HCT116 (cell line): ENCODE measurements at regions of chr10 and their contacts with region 1.

Region 1: DNA sequence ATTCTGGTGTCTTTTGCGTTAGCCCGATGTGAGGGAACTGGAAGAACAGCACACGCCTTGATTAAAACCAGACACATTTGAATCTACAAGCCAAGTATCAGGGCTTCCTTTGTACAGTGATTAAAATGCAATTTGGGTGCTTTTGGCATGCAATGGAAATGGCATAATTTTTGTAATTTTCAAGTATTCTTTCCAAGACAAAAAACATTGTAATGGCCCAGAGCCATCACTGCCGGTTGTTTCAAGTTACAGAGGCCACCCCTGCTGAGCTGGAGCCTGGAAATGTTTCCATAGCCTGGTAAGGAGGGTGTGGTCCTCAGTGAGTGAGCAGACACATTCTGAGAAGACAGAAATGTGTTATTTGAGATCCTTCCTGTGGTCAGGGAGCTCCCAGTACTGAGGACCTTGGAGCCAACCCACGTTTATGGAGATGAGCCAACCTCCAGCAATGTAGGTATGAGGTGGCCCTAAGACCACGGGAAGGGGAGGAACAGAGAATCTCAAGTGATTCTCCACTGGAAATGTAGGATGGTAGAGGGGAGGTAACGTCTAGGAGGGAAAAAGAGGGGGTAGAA is 20.9 kb downstream of the TEX36 start:
- DNase-seq: peak; percentile 97
- ATAC-seq: peak; percentile 92
- H3K4me3 ChIP-seq: peak overlapping the region; percentile 12 to 45
- H3K27ac ChIP-seq: peak overlapping the region; percentile 83
- H3K4me1 ChIP-seq: peaks cover 29 to 38% of the 10 kb centered on the region in 2 experiments
- H3K27me3 ChIP-seq: no peaks in the 10 kb centered on the region
- CTCF ChIP-seq: no peak
- POLR2A ChIP-seq: no peak
- RAD21 ChIP-seq: peak; percentile 16; the same call in 1 of the 2 replicates

Region 2: GRCh38 chr10:125296603-125297002 is 365.4 kb before region 1 on chr10:
- CTCF ChIA-PET with region 1: no interaction called
- POLR2A ChIA-PET with region 1: no interaction called
- RAD21 ChIA-PET with region 1: no interaction called
- intact Hi-C with region 1: no loop called
- DNase-seq: no peak
- ATAC-seq: peak; percentile 52; the same call in 1 of the 2 replicates
- H3K4me3 ChIP-seq: no peak overlapping the region
- H3K27ac ChIP-seq: no peak overlapping the region
- H3K4me1 ChIP-seq: peaks cover 0 to 5% of the 10 kb centered on the region in 2 experiments; a peak in 1 of 4 replicates
- H3K27me3 ChIP-seq: no peaks in the 10 kb centered on the region
- CTCF ChIP-seq: no peak
- POLR2A ChIP-seq: no peak
- RAD21 ChIP-seq: no peak

Region 3: GRCh38 chr10:125700355-125700911 is 38.4 kb after region 1 on chr10:
- CTCF ChIA-PET with region 1: no interaction called
- POLR2A ChIA-PET with region 1: no interaction called
- RAD21 ChIA-PET with region 1: no interaction called
- intact Hi-C with region 1: no loop called
- DNase-seq: no peak
- ATAC-seq: no peak
- H3K4me3 ChIP-seq: no peak overlapping the region
- H3K27ac ChIP-seq: no peak overlapping the region
- H3K4me1 ChIP-seq: no peaks in the 10 kb centered on the region
- H3K27me3 ChIP-seq: 0 out of 2 replicates have a peak, but pooled peaks cover 1% of the 10 kb centered on the region
- CTCF ChIP-seq: peak; percentile 10 to 65 (median 49); a peak in 3 of 6 replicates
- POLR2A ChIP-seq: no peak
- RAD21 ChIP-seq: peak; percentile 77

Region 4: GRCh38 chr10:125719146-125720001 is 57.3 kb after region 1 on chr10 and contains the start of gene EDRF1:
- CTCF ChIA-PET with region 1: no interaction called
- POLR2A ChIA-PET with region 1: interaction called, 7 read pairs
- RAD21 ChIA-PET with region 1: no interaction called
- intact Hi-C with region 1: loop called (anchors 2 kb)
- DNase-seq: peak; percentile 99
- ATAC-seq: peak; percentile 97
- H3K4me3 ChIP-seq: peak within 1 kb of the TSS; percentile 87 to 99
- H3K27ac ChIP-seq: peak within 1 kb of the TSS; percentile 78
- H3K4me1 ChIP-seq: peaks cover 12 to 20% of the 10 kb centered on the region in 2 experiments
- H3K27me3 ChIP-seq: no peaks in the 10 kb centered on the region
- CTCF ChIP-seq: no peak
- POLR2A ChIP-seq: peak; percentile 97
- RAD21 ChIP-seq: no peak; the same call in 1 of the 2 replicates
- total RNA-seq, gene EDRF1: 49.2 TPM